ENCODE measurements at regions of chr18 and their contacts with region 1.

Region 1: DNA sequence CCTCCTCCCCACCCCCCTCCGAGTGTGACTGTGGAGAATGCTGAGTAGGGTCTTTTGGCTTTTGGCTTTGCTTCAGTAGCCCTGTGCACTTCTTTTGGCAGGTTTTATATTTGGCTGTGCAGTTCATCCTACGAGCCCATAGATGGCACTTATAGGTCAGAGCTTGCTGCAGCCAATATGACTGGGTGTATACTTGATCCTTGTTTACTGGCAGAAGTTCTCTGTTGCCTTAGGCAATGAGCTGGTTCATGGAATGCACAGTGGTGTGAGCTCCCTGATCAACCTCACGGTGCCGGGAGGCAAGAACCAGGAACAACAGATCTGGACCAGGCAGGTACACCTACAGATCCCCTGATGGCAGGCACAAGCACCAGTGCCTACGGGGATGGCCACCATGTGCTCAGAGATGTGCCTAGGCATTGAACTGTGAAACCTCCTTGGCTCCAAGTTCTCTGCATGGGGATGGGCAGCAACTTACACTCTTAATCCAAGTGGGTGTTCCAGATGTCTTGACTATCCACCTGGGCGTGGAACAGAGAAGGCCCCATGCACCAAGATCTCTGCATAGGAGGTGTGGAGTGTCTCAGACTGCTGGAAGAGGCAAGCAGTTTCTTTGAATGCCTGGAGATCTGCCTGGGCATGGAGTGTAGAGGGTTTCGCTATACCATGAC is 190.4 kb downstream of the KIAA1328 start:
- ATAC-seq: peak in 3 of 8 experiments; percentile 99 to 100 (median 100)
- H3K4me3 ChIP-seq: no peak overlapping the region
- H3K27ac ChIP-seq: no peak overlapping the region
- H3K4me1 ChIP-seq: no peaks in the 10 kb centered on the region

Region 2: DNA sequence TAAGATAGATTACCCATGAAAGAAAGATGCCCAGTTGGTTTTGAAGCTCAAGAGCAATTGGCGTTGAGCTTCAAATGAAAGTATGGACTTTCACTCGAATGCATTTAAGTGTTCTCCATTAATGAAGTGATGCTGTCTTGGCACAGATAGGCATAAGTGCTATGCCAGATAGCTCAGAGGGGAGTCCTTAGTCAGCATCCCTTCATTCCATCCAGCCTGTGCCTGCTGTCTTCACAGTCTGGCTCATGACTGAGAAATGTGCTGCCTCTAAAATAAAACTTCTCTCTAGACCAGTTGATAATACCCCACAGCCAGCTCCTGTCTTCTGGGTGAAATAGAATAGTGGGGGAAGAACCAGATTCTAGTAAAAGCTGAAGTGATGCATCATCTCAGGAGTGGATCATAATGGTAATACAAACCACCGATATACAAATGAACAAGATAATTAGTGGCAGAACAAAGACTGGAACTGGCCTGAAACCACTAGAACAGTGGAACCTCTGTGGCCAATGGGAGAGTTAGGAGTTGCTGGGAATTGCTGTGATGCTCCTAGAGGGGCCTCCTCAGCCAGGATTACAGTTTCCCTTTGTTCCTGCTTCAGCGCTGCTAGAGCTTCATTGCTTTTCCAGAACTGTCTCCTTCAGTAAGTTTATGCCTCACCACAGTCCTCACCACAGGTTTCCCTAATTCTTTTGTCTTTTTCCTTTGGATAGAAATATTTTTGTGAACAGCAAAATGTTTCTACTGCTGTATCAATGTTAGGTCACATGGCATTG is 168.9 kb after region 1 on chr18:
- in situ Hi-C with region 1: no loop called
- ATAC-seq: no peak
- H3K4me3 ChIP-seq: no peak overlapping the region
- H3K27ac ChIP-seq: no peak overlapping the region
- H3K4me1 ChIP-seq: no peaks in the 10 kb centered on the region

Region 3: GRCh38 chr18:37243741-37244140 is 224.4 kb after region 1 on chr18:
- in situ Hi-C with region 1: loop called in 1 of 9 experiments (anchors 25 kb)
- ATAC-seq: peak in 1 of 8 experiments; percentile 19
- H3K4me3 ChIP-seq: no peak overlapping the region
- H3K27ac ChIP-seq: no peak overlapping the region
- H3K4me1 ChIP-seq: no peaks in the 10 kb centered on the region

Measured in motor neuron (in vitro differentiated cells).